A673 (cell line): ENCODE measurements at regions of chr4 and their contacts with region 1.

Region 1: DNA sequence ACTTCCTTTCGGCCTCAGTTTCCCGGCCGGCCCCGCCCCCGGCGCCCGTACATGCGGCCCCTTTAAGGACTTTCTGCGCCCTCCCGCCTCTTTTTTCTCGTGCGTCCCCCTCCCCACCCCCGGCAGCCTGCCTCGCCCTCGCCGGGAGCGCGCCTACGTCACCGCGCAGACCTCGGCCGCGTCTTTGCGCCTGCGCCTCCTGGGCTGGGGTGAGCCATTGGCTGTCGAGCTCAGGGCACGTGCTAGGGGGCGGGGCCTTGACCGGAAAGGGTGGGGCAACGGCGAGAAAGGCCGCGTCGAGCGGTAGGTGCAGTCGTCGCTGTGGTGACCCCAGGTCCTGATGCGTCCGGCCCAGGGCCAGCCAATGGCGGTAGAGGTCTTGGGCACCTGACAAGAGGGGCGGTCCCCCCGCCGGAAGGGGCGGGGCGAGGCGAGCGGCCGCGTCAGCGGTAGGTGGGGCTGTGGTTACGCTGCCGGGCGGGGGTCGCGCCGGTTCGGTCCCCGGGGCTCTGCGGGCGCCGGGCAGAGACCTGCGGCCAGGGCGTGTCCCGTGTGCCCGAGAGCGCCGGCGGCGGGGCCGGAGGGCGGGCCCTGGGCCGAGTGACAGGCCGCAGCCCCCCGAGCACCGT is at the start of gene UVSSA:
- DNase-seq: peak; percentile 99
- H3K4me3 ChIP-seq: peak within 1 kb of the TSS; percentile 81
- H3K27ac ChIP-seq: peak within 1 kb of the TSS; percentile 93
- H3K4me1 ChIP-seq: no peaks in the 10 kb centered on the region
- H3K27me3 ChIP-seq: no peaks in the 10 kb centered on the region
- CTCF ChIP-seq: no peak
- total RNA-seq, gene UVSSA: 20.3 and 27.8 TPM in 2 replicates

Region 2: GRCh38 chr4:1249148-1249730 is 97.7 kb before region 1 on chr4:
- CTCF ChIA-PET with region 1: no interaction called
- POLR2A ChIA-PET with region 1: no interaction called
- intact Hi-C with region 1: loop called (anchors 2 kb)
- DNase-seq: peak; percentile 95
- H3K4me3 ChIP-seq: peak overlapping the region; percentile 97
- H3K27ac ChIP-seq: peak overlapping the region; percentile 95
- H3K4me1 ChIP-seq: peaks cover 8% of the 10 kb centered on the region
- H3K27me3 ChIP-seq: no peaks in the 10 kb centered on the region
- CTCF ChIP-seq: no peak

Region 3: DNA sequence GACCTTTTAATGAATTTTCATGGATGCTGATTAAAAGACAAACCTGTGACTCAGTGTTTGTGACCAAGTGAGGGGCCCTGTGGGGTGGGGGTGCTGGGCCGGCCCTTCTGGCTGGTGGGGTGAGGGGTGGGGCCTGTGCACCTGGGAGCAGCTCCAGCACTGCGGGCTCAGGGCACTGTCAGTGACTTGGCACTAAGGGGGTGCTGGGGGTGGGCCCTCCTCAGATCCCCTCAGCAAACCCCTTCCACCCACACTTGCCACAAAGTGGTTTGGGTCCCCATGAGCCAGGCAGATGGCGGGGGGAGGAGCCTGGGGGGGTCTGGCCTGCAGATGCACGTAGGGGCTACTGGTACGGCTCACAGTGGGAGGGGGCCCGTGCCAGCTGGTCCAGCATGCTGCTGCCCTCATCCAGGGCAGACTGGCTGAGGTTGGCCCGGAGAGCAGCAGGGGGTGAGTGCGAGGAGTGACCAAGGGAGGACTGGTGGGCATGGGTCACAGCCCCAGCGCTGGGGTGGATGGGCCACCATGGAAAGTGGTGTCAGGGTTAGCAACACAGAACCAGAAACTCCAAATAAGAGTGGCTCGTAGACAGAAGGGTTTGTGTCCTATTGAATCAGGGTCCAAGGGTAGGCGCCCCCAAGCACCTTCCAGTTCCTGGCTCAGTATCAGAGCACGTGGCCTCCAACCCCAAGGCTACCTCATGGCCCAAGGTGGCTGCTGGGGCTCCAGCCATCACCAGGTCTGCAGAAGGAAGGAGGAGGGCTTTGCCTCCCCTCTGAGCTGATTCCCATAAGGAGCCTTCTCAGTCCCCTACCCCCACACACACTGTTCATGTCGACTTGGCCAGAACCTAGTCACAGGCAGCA is 49.3 kb after region 1 on chr4:
- CTCF ChIA-PET with region 1: no interaction called
- POLR2A ChIA-PET with region 1: no interaction called
- intact Hi-C with region 1: no loop called
- DNase-seq: no peak
- H3K4me3 ChIP-seq: no peak overlapping the region
- H3K27ac ChIP-seq: no peak overlapping the region
- H3K4me1 ChIP-seq: no peaks in the 10 kb centered on the region
- H3K27me3 ChIP-seq: peaks cover 10% of the 10 kb centered on the region
- CTCF ChIP-seq: no peak